Heart right ventricle (tissue), 16 donors: ENCODE measurements at regions of chr19 and their contacts with region 1.

Region 1: DNA sequence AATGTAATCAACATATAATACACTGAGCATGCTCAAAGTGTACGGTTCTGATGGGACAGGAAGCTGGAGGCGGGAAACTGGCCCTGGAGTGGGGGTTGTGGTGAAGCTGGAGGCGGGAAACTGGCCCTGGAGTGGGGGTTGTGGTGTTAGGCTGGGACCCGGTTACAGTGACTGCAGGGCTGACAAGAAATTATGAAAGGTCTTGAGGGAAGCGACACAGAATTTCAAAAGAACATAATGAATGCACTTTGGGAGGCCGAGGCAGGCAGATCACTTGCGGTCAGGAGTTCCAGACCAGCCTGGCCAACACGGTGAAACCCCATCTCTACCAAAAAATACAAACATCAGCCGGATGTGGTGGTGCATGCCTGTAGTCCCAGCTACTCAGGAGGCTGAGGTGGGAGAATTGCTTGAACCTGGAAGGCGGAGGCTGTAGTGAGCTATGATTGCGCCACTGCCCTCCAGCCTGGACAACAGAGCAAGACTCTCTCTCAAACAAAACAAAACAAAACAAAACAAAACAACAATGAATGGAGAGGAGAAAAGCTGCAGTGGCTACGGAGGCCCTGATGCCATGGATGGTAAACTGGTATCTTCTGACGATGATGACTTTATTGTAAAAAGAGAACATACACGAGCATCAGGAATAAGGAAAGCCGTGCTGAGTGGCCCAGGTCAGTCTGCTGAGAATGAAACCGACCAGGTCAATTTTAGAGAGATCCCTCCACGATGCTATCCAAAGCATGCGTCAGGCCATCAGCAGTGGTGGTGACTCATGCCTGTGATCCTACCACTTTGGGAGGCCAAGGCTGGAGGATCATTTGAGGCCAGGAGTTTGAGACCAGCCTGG is 61.9 kb downstream of the GADD45B start:
- DNase-seq: no peak
- ATAC-seq: no peak
- H3K4me3 ChIP-seq: no peak overlapping the region
- H3K27ac ChIP-seq: no peak overlapping the region
- H3K4me1 ChIP-seq: peaks cover 13 to 40% (median 29%) of the 10 kb centered on the region in 9 donors
- H3K27me3 ChIP-seq: no peaks in the 10 kb centered on the region
- CTCF ChIP-seq: no peak

Region 2: GRCh38 chr19:2523630-2524311 is 14.0 kb before region 1 on chr19:
- intact Hi-C with region 1: loop called in 1 of 10 experiments (anchors 2 kb)
- DNase-seq: no peak
- ATAC-seq: no peak
- H3K4me3 ChIP-seq: no peak overlapping the region
- H3K27ac ChIP-seq: no peak overlapping the region
- H3K4me1 ChIP-seq: peaks cover 2 to 18% (median 9%) of the 10 kb centered on the region in 9 donors
- H3K27me3 ChIP-seq: no peaks in the 10 kb centered on the region
- CTCF ChIP-seq: no peak